PC-9 (cell line): ENCODE measurements at regions of chr11 and their contacts with region 1.

Region 1: GRCh38 chr11:117098269-117099232 is at the start of gene SIK3:
- DNase-seq: peak; percentile 82 to 90
- H3K4me3 ChIP-seq: peak within 1 kb of the TSS; percentile 85
- H3K27ac ChIP-seq: peak within 1 kb of the TSS; percentile 73
- H3K4me1 ChIP-seq: peaks cover 41% of the 10 kb centered on the region
- H3K27me3 ChIP-seq: no peaks in the 10 kb centered on the region
- CTCF ChIP-seq: peak; percentile 68
- total RNA-seq, gene SIK3: 28.6 and 30.2 TPM in 2 replicates

Region 2: DNA sequence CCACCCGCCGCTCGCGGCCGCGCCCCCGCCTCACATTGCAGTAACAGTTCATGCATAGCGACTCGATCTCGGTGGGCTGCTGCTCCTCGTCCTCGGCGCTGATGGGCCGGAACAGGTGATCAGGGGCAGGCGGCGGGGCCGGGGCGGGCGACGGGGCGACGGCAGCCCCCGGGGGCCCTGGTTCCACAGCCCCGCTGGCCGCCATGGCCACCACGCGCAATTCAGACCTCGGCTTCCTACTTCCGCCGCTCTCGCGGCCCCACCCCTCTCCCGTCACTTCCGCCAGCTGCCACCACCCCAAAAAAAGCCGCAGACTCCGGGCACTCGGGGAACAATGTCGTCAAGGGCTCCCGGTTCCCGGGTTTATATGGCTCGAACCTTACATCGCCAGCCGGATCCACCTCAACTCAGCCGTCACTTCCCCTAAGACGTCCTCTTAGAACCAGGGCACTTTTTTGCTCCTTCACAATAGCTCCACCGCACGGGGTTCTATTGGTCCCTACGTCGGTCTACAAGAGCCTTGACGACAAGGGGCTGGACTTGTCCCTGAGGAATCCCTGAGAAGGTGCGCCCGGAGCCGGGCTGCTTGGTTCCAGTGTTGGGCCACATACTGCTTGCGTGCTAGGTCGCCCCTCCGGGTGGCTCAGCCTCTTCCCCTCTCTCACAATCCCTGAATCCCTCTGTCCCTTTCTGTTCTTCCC is 310.6 kb before region 1 on chr11 and contains the start of gene ZPR1:
- CTCF ChIA-PET with region 1: no interaction called
- POLR2A ChIA-PET with region 1: interaction called, 3 read pairs
- intact Hi-C with region 1: loop called (anchors 2 kb)
- DNase-seq: peak; percentile 68 to 69
- H3K4me3 ChIP-seq: peak within 1 kb of the TSS; percentile 76
- H3K27ac ChIP-seq: no peak within 1 kb of the TSS; the same call in 1 of the 2 replicates
- H3K4me1 ChIP-seq: peaks cover 17% of the 10 kb centered on the region
- H3K27me3 ChIP-seq: no peaks in the 10 kb centered on the region
- CTCF ChIP-seq: no peak
- total RNA-seq, gene ZPR1: 29.6 and 33.0 TPM in 2 replicates

Region 3: GRCh38 chr11:116879800-116880625 is 218.5 kb before region 1 on chr11:
- CTCF ChIA-PET with region 1: interaction called, 3 read pairs
- POLR2A ChIA-PET with region 1: interaction called, 5 read pairs
- intact Hi-C with region 1: loop called (anchors 1 kb)
- DNase-seq: peak; percentile 8 to 65
- H3K4me3 ChIP-seq: no peak overlapping the region
- H3K27ac ChIP-seq: no peak overlapping the region
- H3K4me1 ChIP-seq: 0 out of 2 replicates have a peak, but pooled peaks cover 4% of the 10 kb centered on the region
- H3K27me3 ChIP-seq: no peaks in the 10 kb centered on the region
- CTCF ChIP-seq: peak; percentile 86

Region 4: DNA sequence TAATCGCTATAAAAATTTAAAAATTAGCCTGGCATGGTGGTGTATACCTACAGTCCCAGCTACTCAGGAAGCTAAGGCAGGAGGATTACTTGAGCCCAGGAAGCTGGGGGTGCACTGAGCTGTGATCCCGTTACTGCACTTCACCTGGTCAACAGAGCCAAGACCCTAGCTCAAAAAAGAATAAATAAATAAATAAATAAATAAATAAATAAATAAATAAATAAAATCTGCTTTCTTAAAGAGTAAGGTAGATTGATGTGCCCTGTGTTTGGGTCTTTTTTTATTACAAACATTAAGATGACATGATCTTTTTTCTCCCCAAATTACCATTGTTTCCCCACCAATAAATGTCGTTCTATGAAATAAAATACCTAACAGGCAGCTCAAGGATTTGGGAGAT is 146.8 kb before region 1 on chr11:
- CTCF ChIA-PET with region 1: interaction called, 3 read pairs
- POLR2A ChIA-PET with region 1: interaction called, 19 read pairs
- intact Hi-C with region 1: no loop called
- DNase-seq: no peak
- H3K4me3 ChIP-seq: no peak overlapping the region
- H3K27ac ChIP-seq: no peak overlapping the region
- H3K4me1 ChIP-seq: peaks cover 14% of the 10 kb centered on the region
- H3K27me3 ChIP-seq: no peaks in the 10 kb centered on the region
- CTCF ChIP-seq: no peak

Region 5: GRCh38 chr11:116986521-116987105 is 111.9 kb before region 1 on chr11:
- CTCF ChIA-PET with region 1: no interaction called
- POLR2A ChIA-PET with region 1: no interaction called
- intact Hi-C with region 1: loop called (anchors 10 kb)
- DNase-seq: peak in 1 of 2 experiments; percentile 98
- H3K4me3 ChIP-seq: peak overlapping the region; percentile 19; the same call in 1 of the 2 replicates
- H3K27ac ChIP-seq: peak overlapping the region; percentile 82
- H3K4me1 ChIP-seq: peaks cover 43% of the 10 kb centered on the region
- H3K27me3 ChIP-seq: no peaks in the 10 kb centered on the region
- CTCF ChIP-seq: no peak

Region 6: DNA sequence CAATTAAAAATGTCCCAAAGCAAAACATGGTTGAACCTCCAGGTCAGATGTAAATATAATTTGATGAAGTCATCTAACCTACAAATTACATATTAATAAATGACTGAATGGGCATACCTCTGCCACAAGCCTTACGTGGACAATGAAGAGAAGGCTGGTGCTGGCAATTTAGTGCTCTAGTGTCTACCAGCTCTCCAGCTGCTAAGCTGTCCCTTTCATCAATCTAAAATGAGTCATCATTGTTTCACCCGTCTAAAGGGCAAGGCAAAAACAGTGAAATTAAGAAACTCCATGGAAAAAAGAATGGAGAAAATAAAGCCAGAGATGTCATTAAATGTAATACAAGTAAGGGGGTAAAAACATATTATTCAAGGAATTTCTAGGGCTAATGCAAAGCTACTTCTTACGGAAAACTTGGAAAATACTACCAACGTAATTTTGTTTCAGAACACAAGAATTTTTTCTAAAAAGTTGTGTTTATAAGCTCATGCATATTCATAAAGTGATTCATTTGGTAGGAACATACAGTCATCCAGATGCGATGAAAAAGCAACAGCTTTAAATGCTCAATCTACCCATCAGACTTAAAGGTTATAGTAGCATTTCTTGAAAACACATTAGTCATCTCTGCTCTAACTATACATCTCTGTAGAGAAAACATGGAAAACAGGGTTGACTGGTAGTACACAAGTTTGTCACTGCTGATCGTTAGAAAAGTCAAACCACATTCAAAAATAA is 71.8 kb before region 1 on chr11:
- CTCF ChIA-PET with region 1: no interaction called
- POLR2A ChIA-PET with region 1: no interaction called
- intact Hi-C with region 1: loop called (anchors 5 kb)
- DNase-seq: peak in 1 of 2 experiments; percentile 93
- H3K4me3 ChIP-seq: no peak overlapping the region; the same call in 1 of the 2 replicates
- H3K27ac ChIP-seq: peak overlapping the region; percentile 73
- H3K4me1 ChIP-seq: peaks cover 46% of the 10 kb centered on the region
- H3K27me3 ChIP-seq: no peaks in the 10 kb centered on the region
- CTCF ChIP-seq: no peak

Region 7: DNA sequence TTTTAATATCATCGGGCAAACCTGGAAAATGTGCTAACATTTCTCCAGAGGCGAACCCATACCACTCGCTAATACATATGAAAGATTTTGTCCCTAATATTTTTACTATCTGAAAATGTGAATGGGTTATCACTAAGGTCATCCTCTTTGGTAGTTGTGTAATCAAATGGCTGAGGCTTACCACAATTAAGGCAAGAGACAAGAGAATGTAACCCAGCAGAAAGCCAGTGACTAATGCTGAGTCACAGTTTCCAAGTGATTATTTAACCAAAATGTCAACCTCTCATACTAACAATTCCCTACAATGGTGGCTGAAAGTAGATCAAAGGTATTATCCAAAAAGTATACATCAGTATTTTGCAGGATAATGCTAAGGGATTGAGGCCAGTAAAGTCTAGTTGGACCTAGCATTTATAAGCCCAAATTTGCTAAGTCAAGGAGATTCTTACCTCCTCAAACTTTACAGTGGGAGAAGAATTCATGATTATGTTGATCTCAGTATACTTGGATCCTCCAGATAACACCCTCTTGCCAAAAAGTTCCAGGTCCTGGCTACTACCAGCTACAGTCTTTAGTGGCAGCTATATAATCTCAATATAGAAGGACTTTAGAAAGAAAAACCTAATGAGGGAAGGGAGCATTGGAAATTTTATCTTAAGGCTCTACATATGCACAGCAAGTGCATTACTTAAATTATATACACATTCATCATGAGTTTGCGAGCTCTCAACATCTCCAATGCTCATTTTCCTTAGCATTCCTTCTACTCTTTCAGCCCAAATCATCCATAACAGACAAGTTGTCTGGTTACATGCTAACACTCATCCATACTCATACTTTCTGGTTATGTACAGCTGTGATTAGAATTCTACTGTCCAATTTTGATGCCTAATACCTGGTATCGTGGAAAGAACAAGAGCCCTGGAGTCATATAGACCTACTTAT is 25.8 kb before region 1 on chr11:
- CTCF ChIA-PET with region 1: no interaction called
- POLR2A ChIA-PET with region 1: interaction called, 21 read pairs
- intact Hi-C with region 1: no loop called
- DNase-seq: peak; percentile 38 to 98
- H3K4me3 ChIP-seq: no peak overlapping the region
- H3K27ac ChIP-seq: peak overlapping the region; percentile 87
- H3K4me1 ChIP-seq: peaks cover 72% of the 10 kb centered on the region
- H3K27me3 ChIP-seq: no peaks in the 10 kb centered on the region
- CTCF ChIP-seq: no peak